ENCODE measurements at regions of chr9 and their contacts with region 1.

Region 1: GRCh38 chr9:90142580-90142979 is 500.0 kb downstream of the DIRAS2 start:
- DNase-seq: peak; percentile 52
- ATAC-seq: no peak
- H3K4me3 ChIP-seq: no peak overlapping the region
- H3K27ac ChIP-seq: no peak overlapping the region
- H3K4me1 ChIP-seq: no peaks in the 10 kb centered on the region
- H3K27me3 ChIP-seq: peaks cover 8% of the 10 kb centered on the region; the same call in 1 of the 2 replicates
- CTCF ChIP-seq: peak; percentile 66

Region 2: DNA sequence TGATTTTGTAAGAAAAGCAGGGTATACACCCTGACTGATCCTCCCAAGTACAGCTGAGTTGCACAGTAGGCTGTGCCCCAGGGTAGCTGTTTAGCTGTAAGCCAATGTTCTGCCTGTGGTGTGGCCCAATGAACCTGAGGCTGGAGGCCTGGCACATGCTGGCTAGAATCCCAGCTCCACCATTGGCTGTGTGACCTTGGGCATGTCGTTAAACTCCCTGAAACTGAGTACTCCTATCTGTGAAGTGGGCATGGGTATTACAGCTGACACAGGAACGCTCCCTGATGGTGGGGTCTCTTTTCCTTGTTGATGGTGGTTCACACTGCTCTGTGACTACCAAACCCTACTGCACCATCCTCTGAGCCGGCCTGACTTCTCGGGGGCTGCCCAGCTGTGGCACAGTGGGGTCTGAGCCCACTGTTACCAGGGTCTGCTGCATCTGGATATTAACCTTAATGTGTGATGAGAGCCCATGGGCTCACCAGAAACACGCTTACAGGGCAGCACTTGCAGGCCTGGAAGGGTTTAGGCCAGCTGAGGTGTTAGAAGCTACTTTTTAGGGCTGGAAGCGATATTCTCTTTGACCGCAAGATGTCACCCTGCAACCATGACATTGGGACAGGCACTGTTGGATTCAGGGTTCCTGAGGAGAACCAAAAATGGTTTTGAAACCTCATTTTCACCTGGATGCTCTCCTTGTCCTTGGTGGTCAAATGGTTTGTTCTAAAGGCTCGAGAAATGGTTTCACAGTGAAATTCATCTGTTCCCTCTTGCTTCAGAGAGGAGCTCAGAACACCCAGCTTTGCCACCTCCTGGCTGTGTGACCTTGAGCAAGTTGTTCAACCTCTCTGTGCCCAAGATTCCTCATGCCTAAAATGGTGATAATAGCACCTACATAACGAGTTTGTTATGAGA is 544.6 kb before region 1 on chr9:
- CTCF ChIA-PET with region 1: no interaction called
- POLR2A ChIA-PET with region 1: no interaction called
- intact Hi-C with region 1: loop called (anchors 1 kb)
- DNase-seq: peak; percentile 71
- ATAC-seq: peak; percentile 78; the same call in 1 of the 2 replicates
- H3K4me3 ChIP-seq: no peak overlapping the region
- H3K27ac ChIP-seq: no peak overlapping the region
- H3K4me1 ChIP-seq: no peaks in the 10 kb centered on the region
- H3K27me3 ChIP-seq: peaks cover 25% of the 10 kb centered on the region
- CTCF ChIP-seq: peak; percentile 77

Region 3: DNA sequence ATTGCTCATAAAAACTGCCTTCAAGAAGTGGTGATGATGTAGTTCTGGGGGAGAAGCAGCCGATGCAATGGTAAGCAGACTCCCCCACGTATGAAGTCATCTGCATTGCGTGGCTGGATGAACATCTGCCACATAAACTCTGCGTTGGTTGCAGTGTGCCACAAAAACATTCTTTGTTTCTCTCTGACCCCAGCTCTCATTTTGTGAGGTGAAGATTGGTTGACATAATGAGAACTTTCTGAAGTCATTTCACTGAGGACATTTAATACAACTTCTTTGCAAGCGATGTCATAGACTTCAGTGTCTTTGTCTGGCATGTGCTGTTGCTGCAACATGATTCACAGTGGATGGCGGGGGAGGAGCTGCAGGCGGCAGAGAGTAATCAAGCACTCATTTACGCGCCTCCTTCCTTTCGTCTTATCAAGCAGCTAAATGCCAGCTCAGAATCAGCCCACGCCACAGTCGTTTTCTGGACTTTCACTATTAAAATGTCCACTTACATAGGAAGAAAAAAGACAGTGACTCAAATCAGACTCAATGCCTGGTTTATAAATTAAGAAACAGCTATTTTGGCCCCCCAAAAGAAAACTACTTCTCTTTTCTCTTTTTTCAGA is 1372.6 kb after region 1 on chr9:
- CTCF ChIA-PET with region 1: interaction called, 11 read pairs
- POLR2A ChIA-PET with region 1: no interaction called
- intact Hi-C with region 1: no loop called
- DNase-seq: peak; percentile 11
- ATAC-seq: peak; percentile 48; the same call in 1 of the 2 replicates
- H3K4me3 ChIP-seq: no peak overlapping the region
- H3K27ac ChIP-seq: no peak overlapping the region
- H3K4me1 ChIP-seq: no peaks in the 10 kb centered on the region
- H3K27me3 ChIP-seq: no peaks in the 10 kb centered on the region
- CTCF ChIP-seq: no peak

Measured in PC-3 (cell line).